H1 (cell line): ENCODE measurements at regions of chr2 and their contacts with region 1.

Region 1: DNA sequence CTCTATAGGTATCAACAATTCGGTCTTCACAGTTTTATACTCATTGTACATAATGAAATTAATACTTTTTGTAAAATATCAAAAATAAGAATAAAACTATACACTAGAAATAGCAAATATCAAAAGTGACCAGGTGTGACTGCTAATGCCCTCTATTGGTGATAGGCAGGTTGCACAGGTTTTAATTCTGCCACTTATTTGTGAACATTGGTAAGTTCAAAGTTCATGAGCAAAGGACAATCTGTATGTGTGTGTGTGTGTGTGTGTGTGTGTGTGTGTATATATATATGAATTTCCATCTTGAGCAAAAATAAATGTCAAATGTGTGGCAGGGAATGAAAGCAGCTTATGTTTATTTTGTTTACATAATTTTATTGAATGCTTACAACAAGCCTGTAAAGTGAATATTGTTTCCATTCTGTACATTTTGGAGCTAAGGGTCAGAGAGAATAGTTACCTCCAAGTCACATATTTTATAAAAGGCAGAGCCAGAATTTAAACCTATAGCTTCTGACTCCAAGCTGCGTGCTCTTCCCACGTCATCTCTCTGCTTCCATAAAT is 537.4 kb downstream of the CPS1 start:
- DNase-seq: no peak
- H3K4me3 ChIP-seq: no peak overlapping the region
- H3K27ac ChIP-seq: no peak overlapping the region
- H3K4me1 ChIP-seq: no peaks in the 10 kb centered on the region
- H3K27me3 ChIP-seq: no peaks in the 10 kb centered on the region
- CTCF ChIP-seq: peak in 2 of 3 experiments; percentile 19 to 49; a peak in 2 of 4 replicates
- EP300 ChIP-seq: no peak
- POLR2A ChIP-seq: no peak
- RAD21 ChIP-seq: peak; percentile 10 to 24; a peak in 2 of 4 replicates

Region 2: GRCh38 chr2:211055438-211055837 is 38.4 kb before region 1 on chr2:
- CTCF ChIA-PET with region 1: interaction called, 20 read pairs
- POLR2A ChIA-PET with region 1: no interaction called
- DNase-seq: peak; percentile 5 to 50
- H3K4me3 ChIP-seq: no peak overlapping the region
- H3K27ac ChIP-seq: no peak overlapping the region
- H3K4me1 ChIP-seq: no peaks in the 10 kb centered on the region
- H3K27me3 ChIP-seq: no peaks in the 10 kb centered on the region
- CTCF ChIP-seq: peak; percentile 58 to 74 (median 64)
- EP300 ChIP-seq: no peak
- POLR2A ChIP-seq: no peak
- RAD21 ChIP-seq: peak; percentile 81

Region 3: GRCh38 chr2:211103989-211104388 is 10.2 kb after region 1 on chr2:
- CTCF ChIA-PET with region 1: interaction called, 17 read pairs
- POLR2A ChIA-PET with region 1: no interaction called
- DNase-seq: no peak
- H3K4me3 ChIP-seq: no peak overlapping the region
- H3K27ac ChIP-seq: no peak overlapping the region
- H3K4me1 ChIP-seq: no peaks in the 10 kb centered on the region
- H3K27me3 ChIP-seq: no peaks in the 10 kb centered on the region
- CTCF ChIP-seq: no peak
- EP300 ChIP-seq: no peak
- POLR2A ChIP-seq: no peak
- RAD21 ChIP-seq: no peak

Region 4: DNA sequence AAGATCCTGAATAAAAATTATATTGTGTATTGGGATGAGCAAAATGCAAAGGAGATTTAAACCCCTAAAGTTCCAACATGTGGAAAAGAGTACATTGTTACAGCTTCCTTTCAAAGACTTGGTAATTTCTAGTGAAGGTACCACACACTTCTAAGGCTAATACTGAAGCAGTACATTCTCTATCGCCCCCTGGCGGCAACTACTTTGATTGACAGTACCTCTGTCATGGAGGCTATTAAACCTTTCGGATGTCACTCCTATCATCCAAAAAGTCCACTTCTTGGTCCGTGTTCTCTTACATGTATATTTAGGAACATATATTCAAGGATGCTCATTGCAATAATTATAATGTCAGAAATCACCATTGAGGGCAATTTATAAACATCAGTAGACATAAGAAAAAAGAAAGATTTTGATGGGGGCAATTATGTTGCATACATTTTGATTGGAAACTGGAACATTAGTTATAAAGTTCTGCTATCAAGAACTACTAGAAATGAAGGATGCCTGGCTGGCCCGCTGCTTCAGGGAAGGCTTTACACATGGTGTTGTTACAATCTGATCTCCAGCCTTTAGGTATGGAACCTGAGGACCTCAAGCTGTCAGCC is 64.1 kb after region 1 on chr2:
- CTCF ChIA-PET with region 1: interaction called, 15 read pairs
- POLR2A ChIA-PET with region 1: no interaction called
- DNase-seq: peak in 1 of 2 experiments; percentile 88
- H3K4me3 ChIP-seq: no peak overlapping the region
- H3K27ac ChIP-seq: no peak overlapping the region
- H3K4me1 ChIP-seq: no peaks in the 10 kb centered on the region
- H3K27me3 ChIP-seq: peaks cover 0 to 1% (median 0%) of the 10 kb centered on the region in 4 experiments; a peak in 1 of 7 replicates
- CTCF ChIP-seq: peak in 2 of 3 experiments; percentile 71 to 80; a peak in 3 of 4 replicates
- EP300 ChIP-seq: no peak
- POLR2A ChIP-seq: no peak
- RAD21 ChIP-seq: peak; percentile 72 to 78

Region 5: DNA sequence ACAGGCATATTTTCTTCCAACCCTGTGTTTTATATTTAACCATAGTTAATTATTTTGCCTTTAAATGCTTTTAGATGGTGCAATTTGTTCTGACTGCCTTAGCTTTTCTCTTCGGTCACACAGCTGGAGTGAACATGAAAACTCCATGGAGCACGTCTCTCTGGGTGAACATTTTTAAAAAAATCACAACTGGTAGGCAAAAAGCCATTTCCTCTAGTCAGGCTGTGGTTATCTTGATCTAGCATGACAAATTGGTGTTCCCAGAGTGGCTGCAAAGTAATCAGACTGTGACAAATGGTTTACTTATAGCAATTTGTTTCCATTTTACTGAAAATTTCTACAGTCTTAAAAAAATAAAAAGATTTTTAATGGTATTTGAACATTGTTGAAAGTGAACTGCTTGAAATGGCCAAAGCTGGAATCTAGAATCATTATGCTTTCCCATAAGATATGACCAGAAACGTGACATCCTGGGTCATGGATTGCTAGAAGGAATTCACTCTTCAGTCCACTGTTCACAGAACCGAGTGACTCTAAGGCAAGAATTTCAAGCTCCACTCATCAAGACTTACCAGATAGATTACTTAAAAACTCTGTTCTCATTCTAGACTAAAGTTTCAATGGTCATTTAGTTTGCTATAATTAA is 166.1 kb after region 1 on chr2:
- CTCF ChIA-PET with region 1: no interaction called
- POLR2A ChIA-PET with region 1: no interaction called
- DNase-seq: no peak
- H3K4me3 ChIP-seq: no peak overlapping the region
- H3K27ac ChIP-seq: no peak overlapping the region
- H3K4me1 ChIP-seq: no peaks in the 10 kb centered on the region
- H3K27me3 ChIP-seq: no peaks in the 10 kb centered on the region
- CTCF ChIP-seq: no peak
- EP300 ChIP-seq: no peak
- POLR2A ChIP-seq: no peak
- RAD21 ChIP-seq: no peak

Region 6: DNA sequence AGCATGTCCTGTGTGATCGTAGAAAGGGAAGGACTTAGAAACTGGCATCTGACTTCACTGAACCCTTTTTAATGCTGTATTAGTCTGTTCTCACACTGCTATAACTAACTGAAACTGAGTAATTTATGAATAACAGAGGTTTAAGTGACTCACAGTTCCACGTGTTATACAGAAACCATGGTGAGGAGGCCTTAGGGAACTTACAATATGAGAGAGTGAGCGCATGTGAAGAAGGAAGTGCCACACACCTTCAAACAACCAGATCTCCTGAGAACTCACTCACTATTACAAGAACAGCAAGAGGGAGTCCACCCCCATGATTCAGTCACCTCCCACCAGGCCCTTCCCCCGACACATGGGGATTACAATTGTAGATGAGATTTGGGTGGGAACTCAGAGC is 273.9 kb after region 1 on chr2:
- CTCF ChIA-PET with region 1: no interaction called
- POLR2A ChIA-PET with region 1: no interaction called
- DNase-seq: no peak
- H3K4me3 ChIP-seq: no peak overlapping the region
- H3K27ac ChIP-seq: no peak overlapping the region
- H3K4me1 ChIP-seq: peaks cover 0 to 5% (median 3%) of the 10 kb centered on the region in 4 experiments; a peak in 2 of 7 replicates
- H3K27me3 ChIP-seq: no peaks in the 10 kb centered on the region
- CTCF ChIP-seq: no peak
- EP300 ChIP-seq: no peak
- POLR2A ChIP-seq: no peak
- RAD21 ChIP-seq: no peak